B cell (primary cell): ENCODE measurements at regions of chr3 and their contacts with region 1.

Region 1: GRCh38 chr3:88149509-88150362 is at the start of gene C3orf38:
- DNase-seq: peak; percentile 90
- ATAC-seq: peak; percentile 88
- H3K4me3 ChIP-seq: peak within 1 kb of the TSS; percentile 88 to 100 (median 95)
- H3K4me3 Mint-ChIP-seq: peak within 1 kb of the TSS; percentile 99
- H3K27ac ChIP-seq: peak within 1 kb of the TSS; percentile 93 to 98
- H3K27ac Mint-ChIP-seq: peak within 1 kb of the TSS; percentile 99
- H3K4me1 ChIP-seq: peaks cover 25 to 33% of the 10 kb centered on the region in 2 donors
- H3K4me1 Mint-ChIP-seq: peaks cover 35% of the 10 kb centered on the region
- H3K27me3 ChIP-seq: no peaks in the 10 kb centered on the region
- H3K27me3 Mint-ChIP-seq: no peaks in the 10 kb centered on the region
- CTCF ChIP-seq: no peak
- total RNA-seq, gene C3orf38: 42.5 and 50.0 TPM in 2 replicates

Region 2: DNA sequence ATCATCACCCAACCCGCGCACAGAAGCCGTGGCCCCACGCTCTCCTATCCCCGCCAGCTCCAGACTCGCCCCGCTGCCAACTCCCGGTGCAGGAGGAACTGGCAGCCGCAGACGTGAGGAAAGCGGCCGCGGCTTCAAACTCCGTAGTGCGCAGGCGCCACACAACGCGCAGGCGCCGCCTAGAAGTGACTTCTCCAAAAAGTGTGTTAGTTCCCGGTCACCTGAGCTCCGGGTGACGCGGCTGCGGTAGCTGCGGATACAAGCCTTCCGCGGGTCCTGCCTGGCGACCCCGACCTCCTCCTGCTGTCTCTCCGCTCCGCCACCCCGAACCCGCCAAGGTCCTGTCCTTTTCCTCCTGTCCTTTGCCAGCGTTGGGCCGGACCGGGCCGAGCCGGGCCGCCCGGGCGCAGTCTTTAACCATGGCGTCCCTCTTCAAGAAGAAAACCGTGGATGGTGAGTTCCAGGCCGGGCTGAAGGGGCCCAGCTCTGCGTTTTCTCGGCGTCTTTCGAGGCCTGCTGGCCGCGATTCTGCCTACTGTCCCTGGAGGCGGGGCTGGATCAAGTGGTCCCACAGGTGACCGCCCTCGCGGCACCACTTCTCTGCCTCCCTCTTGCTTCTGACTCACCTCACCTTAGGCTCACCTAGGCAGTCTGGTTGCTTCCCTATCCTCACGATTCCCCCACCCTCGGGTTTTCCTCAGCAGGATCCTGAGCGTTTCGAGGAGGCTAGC is 922.5 kb before region 1 on chr3 and contains the start of gene CHMP2B:
- CTCF ChIA-PET with region 1: no interaction called
- POLR2A ChIA-PET with region 1: no interaction called
- intact Hi-C with region 1: loop called (anchors 1 kb)
- DNase-seq: peak; percentile 96
- ATAC-seq: peak; percentile 87
- H3K4me3 ChIP-seq: peak within 1 kb of the TSS; percentile 42 to 99 (median 96)
- H3K4me3 Mint-ChIP-seq: peak within 1 kb of the TSS; percentile 97
- H3K27ac ChIP-seq: peak within 1 kb of the TSS; percentile 89 to 98
- H3K27ac Mint-ChIP-seq: peak within 1 kb of the TSS; percentile 97
- H3K4me1 ChIP-seq: peaks cover 13 to 16% of the 10 kb centered on the region in 2 donors
- H3K4me1 Mint-ChIP-seq: peaks cover 53% of the 10 kb centered on the region
- H3K27me3 ChIP-seq: peaks cover 0 to 7% (median 3%) of the 10 kb centered on the region in 4 experiments
- H3K27me3 Mint-ChIP-seq: peaks cover 14% of the 10 kb centered on the region
- CTCF ChIP-seq: no peak
- total RNA-seq, gene CHMP2B: 22.2 and 25.0 TPM in 2 replicates

Region 3: DNA sequence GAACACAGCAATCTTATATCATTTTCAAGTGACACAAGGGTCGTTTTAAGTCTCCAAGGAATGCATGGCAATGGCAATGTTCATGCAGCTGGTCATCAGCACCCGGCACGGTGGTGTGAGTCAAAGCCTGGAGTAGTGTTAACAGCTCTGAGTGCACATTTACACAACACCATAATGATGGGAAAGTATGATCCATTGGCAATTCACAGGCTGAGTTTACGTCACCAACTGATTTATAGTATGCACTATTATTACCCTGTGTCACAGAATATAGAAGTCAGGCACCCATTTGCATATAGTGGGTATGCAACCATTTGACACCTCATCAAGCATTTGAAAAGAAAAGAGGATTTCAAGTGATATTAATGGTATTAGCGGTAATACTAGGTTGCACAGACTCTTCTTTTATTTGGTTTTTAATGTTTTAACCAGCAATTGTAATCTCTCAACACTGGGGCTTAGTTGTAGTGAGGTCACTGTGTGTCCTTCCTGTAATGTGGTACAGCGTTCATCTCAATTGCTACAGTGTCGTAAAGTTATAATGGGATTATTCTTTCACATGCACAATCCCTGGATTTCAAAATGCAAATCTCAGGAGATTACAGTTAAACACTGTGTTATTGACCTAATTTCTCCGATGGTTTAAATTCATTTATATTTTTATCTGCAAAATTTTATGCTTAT is 113.8 kb after region 1 on chr3:
- CTCF ChIA-PET with region 1: no interaction called
- POLR2A ChIA-PET with region 1: no interaction called
- intact Hi-C with region 1: no loop called
- DNase-seq: no peak
- ATAC-seq: no peak
- H3K4me3 ChIP-seq: no peak overlapping the region
- H3K4me3 Mint-ChIP-seq: no peak overlapping the region
- H3K27ac ChIP-seq: no peak overlapping the region
- H3K27ac Mint-ChIP-seq: no peak overlapping the region
- H3K4me1 ChIP-seq: no peaks in the 10 kb centered on the region
- H3K4me1 Mint-ChIP-seq: no peaks in the 10 kb centered on the region
- H3K27me3 ChIP-seq: no peaks in the 10 kb centered on the region
- H3K27me3 Mint-ChIP-seq: no peaks in the 10 kb centered on the region
- CTCF ChIP-seq: no peak